ENCODE measurements at regions of chr3 and their contacts with region 1.

Region 1: GRCh38 chr3:6799264-6799915 is 61.5 kb upstream of the GRM7 start:
- DNase-seq: peak; percentile 17
- CTCF ChIP-seq: peak; percentile 86

Region 2: DNA sequence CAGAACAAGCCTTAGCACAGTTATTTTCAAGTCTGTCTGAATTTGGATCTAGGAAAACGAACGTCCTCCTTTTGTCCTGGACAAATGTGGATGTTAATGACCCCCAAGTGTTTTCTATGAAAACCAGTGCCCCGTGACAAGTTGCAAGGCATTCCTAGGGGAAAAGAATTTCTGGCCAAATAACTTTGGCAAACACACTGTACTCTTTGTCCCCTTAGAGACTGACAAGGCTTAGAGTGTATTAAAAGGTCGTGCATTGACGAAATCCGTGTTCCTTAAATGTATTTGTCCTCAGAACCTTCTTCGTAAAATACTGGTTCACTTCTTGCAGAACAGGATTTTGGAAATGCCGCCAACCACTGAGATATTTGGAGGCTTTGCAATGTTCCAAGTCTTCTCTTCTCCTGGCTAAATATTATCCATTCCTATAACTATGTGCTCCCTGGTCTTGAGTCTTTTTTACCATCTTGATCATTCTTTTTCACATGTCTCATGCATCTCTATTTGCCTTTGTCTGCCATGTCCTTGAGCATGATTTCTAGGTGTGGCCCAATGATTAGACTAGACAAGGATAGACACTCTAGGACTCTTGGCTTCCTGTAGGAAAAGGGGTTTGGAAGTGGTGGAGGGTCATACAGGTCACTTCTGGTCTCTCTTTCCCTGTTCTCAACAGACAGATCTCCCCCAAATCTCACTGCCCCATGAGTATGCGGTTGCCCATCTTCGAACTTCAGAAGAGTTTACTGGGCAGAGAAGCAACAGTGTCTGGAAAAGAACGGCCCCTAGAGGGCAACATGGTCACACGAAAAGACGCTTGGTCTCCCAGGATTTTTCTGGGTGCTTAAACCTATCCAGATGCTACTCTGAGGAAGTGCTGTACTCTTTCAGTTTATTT is 1494.4 kb before region 1 on chr3:
- in situ Hi-C with region 1: loop called (anchors 25 kb)
- DNase-seq: peak; percentile 39
- CTCF ChIP-seq: peak; percentile 71

Measured in GM13977 (cell line).